Colonic mucosa (tissue), 4 donors: ENCODE measurements at regions of chr1 and their contacts with region 1.

Region 1: GRCh38 chr1:9101510-9102146 is 27.3 kb downstream of the GPR157 start:
- DNase-seq: peak; percentile 52
- H3K4me3 ChIP-seq: no peak overlapping the region
- H3K27ac ChIP-seq: no peak overlapping the region
- H3K4me1 ChIP-seq: no peaks in the 10 kb centered on the region
- H3K27me3 ChIP-seq: no peaks in the 10 kb centered on the region
- CTCF ChIP-seq: peak; percentile 68

Region 2: GRCh38 chr1:9004700-9005394 is 96.8 kb before region 1 on chr1:
- intact Hi-C with region 1: loop called (anchors 5 kb)
- DNase-seq: peak; percentile 91
- H3K4me3 ChIP-seq: no peak overlapping the region
- H3K27ac ChIP-seq: no peak overlapping the region
- H3K4me1 ChIP-seq: no peaks in the 10 kb centered on the region
- H3K27me3 ChIP-seq: no peaks in the 10 kb centered on the region
- CTCF ChIP-seq: peak; percentile 88

Region 3: GRCh38 chr1:9037476-9038337 is 63.9 kb before region 1 on chr1:
- intact Hi-C with region 1: no loop called
- DNase-seq: no peak
- H3K4me3 ChIP-seq: no peak overlapping the region
- H3K27ac ChIP-seq: no peak overlapping the region
- H3K4me1 ChIP-seq: no peaks in the 10 kb centered on the region
- H3K27me3 ChIP-seq: no peaks in the 10 kb centered on the region
- CTCF ChIP-seq: no peak

Region 4: GRCh38 chr1:9225468-9225785 is 123.8 kb after region 1 on chr1:
- intact Hi-C with region 1: no loop called
- DNase-seq: no peak
- H3K4me3 ChIP-seq: no peak overlapping the region
- H3K27ac ChIP-seq: no peak overlapping the region
- H3K4me1 ChIP-seq: no peaks in the 10 kb centered on the region
- H3K27me3 ChIP-seq: no peaks in the 10 kb centered on the region
- CTCF ChIP-seq: no peak